ENCODE measurements at regions of chr10 and their contacts with region 1.

Region 1: DNA sequence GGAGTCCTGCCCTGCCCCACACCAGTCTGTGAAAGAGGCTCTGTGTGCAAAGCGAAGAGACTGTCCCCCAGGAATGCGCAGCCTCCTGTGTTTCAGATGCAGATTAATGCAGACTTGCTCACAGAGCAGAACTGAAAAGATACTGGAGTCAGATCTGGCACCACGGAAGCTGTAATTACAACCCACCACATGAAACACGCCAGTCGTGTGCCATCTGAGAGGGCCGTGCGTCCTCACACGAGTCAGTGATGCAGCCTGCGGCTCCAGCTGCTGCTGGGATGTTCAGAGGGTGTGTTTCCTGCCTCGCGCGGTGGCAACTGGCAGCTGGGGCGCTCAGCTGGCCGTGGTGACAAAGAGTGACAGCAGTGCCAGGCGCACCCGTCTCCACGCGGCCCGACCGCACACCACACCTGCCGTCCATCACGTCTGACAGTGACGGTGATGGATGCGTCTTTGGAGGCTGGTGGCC is 50.0 kb downstream of the NKX6-2 start:
- DNase-seq: peak; percentile 14 to 93 (median 90)
- H3K4me3 ChIP-seq: peak overlapping the region in 22 of 59 donors; percentile 8 to 50 (median 29)
- H3K27ac ChIP-seq: peak overlapping the region; percentile 81 to 100 (median 99)
- H3K27me3 ChIP-seq: no peaks in the 10 kb centered on the region
- CTCF ChIP-seq: peak in 1 of 56 donors; percentile 6

Region 2: DNA sequence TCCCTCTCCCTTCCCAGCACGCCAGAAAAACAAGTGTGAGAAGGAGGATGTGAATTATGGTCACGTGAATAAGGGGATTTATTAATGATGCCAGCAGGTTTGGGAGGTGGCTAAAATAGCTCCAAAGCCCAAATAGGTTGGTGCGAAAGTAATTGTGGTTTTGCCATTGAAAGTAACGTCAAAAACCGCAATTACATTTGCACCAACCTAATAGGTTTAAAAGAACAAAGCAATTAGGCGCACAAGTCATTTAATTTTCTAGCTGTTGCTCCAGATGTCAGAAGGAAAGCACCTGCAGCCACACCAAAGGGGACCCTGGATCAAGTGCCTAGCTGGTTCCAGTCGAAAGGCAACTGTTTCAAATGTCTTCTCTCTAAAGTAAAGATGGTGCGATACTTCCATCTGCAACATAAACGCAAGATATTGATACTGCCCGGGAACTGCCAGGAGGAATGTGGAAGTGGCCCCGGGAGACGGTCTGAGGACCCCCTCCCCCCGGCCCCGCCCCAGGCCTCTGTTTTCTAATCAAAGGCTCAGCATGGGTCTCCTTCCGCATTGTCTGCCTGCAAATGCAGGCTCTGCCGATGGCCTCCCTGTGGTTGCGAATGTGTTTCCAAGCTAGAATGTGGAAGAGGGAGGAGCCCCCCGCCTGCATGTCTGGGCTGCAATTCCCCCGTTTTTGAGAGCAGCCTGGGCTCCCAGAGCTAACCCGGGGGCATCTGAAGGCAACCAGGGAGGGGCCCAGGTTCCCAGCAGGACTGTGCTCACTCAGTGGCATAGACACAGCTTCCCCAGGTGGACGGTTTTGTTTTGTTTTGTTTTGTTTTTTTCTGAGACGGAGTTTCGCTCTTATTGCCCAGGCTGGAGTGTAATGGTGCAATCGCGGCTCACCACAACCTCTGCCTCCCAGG is 1059.2 kb before region 1 on chr10:
- intact Hi-C with region 1: no loop called
- DNase-seq: peak in 2 of 10 donors; percentile 7 to 12
- H3K4me3 ChIP-seq: no peak overlapping the region
- H3K27ac ChIP-seq: no peak overlapping the region
- H3K27me3 ChIP-seq: peaks cover 0 to 25% (median 7%) of the 10 kb centered on the region in 45 donors
- CTCF ChIP-seq: no peak

Region 3: GRCh38 chr10:132684164-132684891 is 51.6 kb before region 1 on chr10:
- intact Hi-C with region 1: loop called (anchors 2 to 10 kb)
- DNase-seq: peak in 9 of 10 donors; percentile 0 to 40 (median 27)
- H3K4me3 ChIP-seq: peak overlapping the region in 1 of 59 donors; percentile 21
- H3K27ac ChIP-seq: peak overlapping the region; percentile 76 to 100 (median 97)
- H3K27me3 ChIP-seq: no peaks in the 10 kb centered on the region
- CTCF ChIP-seq: no peak

Region 4: DNA sequence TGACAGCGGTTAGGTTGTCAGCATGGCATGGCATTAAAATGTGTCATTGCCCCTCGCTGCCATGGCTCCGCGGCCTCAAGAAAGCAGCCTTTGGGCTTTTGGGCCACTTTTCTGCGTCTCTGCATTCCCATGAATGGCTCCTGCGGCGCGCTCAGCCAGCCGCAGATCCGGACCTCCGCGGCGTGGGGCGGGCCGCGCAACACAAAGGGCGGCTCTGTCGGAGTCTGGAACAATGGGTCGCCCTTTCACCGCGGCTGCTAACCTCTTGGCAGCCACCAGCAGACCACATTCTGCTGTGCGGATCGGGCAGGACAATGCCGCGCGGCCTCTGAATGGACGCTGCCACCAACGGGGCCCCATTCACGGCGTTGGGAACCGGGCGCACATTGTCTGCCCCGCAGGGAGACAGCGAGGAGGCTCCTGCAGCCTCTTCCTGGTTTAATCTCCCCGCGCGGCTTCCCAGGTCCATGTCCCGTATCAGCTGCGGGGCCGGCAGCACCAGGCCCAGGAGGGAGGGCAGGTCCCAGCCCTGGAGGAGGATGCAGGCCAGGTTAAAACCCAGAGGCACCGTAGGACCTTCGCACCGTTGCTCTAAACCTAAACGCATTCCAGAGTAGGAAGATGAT is 21.7 kb before region 1 on chr10:
- intact Hi-C with region 1: loop called in 1 of 2 experiments (anchors 1 kb)
- DNase-seq: peak; percentile 41 to 93 (median 92)
- H3K4me3 ChIP-seq: peak overlapping the region in 40 of 59 donors; percentile 0 to 47 (median 28)
- H3K27ac ChIP-seq: peak overlapping the region; percentile 79 to 100 (median 96)
- H3K27me3 ChIP-seq: no peaks in the 10 kb centered on the region
- CTCF ChIP-seq: peak in 17 of 56 donors; percentile 8 to 35 (median 20)

Region 5: DNA sequence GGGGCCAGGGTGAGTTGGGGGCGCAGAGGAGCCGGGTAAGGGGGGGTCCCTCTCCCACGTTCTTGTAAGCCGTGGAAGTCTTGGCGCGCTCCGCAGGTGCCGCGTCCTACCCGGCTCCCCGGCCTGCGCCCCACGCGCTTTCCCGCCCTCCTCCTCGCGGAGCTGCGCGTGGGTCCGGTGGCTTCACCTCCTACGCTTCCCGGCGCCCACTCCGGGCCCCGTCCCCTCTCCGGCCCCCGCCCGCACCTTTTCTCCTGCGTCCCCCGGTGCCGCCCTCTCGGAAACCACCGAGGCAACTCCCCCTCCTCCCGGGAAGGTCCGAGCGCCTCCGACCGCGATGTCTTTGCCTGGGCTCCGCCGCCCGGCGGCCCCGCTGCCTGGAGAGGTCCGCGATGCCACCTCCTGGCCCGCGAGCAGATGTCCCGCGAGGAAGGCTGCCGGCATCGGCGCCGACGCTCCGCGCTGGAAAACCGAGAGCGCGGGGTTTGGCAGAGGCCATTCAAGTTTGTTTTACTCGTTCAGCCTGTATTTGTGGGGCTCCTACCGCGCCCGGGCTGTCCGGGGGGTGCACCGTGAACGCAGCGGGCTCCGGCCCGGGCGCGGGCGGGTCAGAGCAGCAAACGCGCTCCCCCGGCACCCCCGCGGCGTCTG is 52.3 kb after region 1 on chr10:
- intact Hi-C with region 1: loop called (anchors 2 kb)
- DNase-seq: peak in 6 of 10 donors; percentile 52 to 79 (median 59)
- H3K4me3 ChIP-seq: peak overlapping the region in 58 of 59 donors; percentile 7 to 70 (median 53)
- H3K27ac ChIP-seq: peak overlapping the region in 50 of 59 donors; percentile 22 to 92 (median 84)
- H3K27me3 ChIP-seq: peaks cover 0 to 61% (median 46%) of the 10 kb centered on the region in 45 donors
- CTCF ChIP-seq: peak in 54 of 56 donors; percentile 13 to 75 (median 48)

Region 6: DNA sequence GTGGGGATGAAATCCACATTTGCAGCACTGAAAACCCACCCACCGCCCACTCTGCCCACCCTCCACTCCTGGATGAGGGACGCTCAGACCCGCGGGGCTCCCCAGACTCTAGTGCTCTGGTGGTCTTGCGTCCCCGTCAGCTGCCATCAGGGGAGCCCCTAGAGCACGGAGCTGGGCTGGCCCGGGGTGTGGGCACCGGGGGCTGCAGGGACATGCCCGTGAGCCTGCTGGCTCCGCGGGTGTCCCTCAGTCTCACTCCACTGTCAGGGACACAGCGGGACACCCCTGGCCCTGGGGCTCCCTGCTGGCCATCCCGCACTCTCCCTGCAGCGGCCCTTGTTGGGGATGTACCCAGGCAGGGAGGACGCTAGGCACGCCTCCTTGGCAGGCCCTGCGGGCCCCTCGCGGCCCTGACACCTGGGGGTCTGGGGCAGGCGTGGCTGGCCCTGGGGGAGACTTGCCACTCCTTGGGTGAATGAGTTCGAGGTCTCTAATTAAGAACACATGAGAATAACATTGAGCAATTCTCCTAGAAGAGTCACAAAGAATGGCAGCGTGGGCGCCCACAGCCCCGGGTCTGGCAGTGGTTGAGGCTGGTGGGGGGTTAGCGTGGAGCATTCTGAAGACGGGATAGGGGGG is 142.3 kb after region 1 on chr10:
- intact Hi-C with region 1: no loop called
- DNase-seq: peak in 6 of 10 donors; percentile 5 to 39 (median 25)
- H3K4me3 ChIP-seq: no peak overlapping the region
- H3K27ac ChIP-seq: no peak overlapping the region
- H3K27me3 ChIP-seq: peaks cover 0 to 14% (median 0%) of the 10 kb centered on the region in 45 donors
- CTCF ChIP-seq: no peak

Measured in dorsolateral prefrontal cortex (tissue), 120 donors.